ENCODE measurements at regions of chr4 and their contacts with region 1.

Region 1: DNA sequence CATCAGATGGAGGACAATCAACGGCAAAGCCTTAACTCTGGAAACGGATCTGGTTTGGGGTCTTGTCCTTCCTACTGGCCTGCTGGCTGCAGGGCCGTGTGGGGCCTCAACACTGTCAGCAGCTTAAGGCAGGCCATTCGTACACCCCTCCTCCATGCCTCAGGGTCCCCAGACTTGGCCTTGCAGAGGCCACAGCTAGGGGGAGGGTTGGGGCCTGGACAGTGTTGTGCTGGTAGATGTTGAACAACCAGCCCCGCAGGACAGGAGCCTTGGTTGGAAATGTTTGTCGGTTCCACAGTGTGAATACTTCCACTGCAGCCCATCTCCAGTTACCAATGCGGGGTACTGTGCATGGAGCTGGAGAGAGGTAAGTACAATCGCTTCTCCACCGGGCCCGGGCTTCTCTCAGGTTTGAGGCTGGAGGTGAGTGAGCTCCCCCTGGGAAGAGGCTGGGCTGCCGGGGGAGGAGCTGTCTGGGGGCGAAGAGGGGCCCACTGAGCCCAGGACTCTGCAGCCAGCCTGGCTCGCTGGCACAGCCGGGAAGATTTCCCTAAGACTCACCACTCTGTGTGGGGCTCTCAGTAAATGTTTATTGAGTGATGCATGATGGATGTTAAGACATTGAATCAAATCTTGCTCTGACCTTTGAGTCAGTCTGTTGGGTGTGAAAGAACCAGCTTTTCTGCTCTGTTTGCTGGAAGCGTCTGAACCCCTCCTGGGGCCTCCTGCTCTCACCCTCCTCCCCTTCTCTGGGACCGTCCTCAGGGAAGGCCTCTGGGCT is 19.7 kb upstream of the GPR78 start:
- DNase-seq: peak in 1 of 5 donors; percentile 20
- H3K4me3 ChIP-seq: no peak overlapping the region
- H3K27ac ChIP-seq: no peak overlapping the region
- H3K4me1 ChIP-seq: no peaks in the 10 kb centered on the region
- H3K27me3 ChIP-seq: no peaks in the 10 kb centered on the region
- CTCF ChIP-seq: no peak
- EP300 ChIP-seq: no peak
- POLR2A ChIP-seq: no peak

Region 2: GRCh38 chr4:7524064-7524682 is 1036.3 kb before region 1 on chr4:
- intact Hi-C with region 1: no loop called
- DNase-seq: no peak
- H3K4me3 ChIP-seq: no peak overlapping the region
- H3K27ac ChIP-seq: no peak overlapping the region
- H3K4me1 ChIP-seq: peaks cover 6% of the 10 kb centered on the region
- H3K27me3 ChIP-seq: no peaks in the 10 kb centered on the region
- CTCF ChIP-seq: no peak
- EP300 ChIP-seq: no peak
- POLR2A ChIP-seq: no peak

Region 3: DNA sequence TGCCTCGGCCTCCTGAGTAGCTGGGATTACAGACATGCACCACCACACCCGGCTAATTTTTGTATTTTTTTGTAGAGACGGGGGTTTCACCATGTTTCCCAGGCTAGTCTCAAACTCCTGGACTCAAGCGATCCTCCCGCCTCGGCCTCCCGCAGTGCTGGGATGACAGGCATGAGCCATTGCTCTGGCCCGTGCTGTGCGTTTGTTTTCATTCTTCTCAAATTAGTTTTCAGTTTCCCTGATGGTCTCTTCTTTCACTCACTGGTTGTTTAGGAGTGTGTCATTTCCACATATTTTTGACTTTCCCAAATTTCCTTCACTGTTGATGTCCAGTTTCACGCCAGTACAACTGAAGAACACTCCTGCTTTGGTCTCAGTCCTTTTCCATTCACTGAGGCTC is 329.6 kb before region 1 on chr4:
- intact Hi-C with region 1: loop called in 1 of 4 experiments (anchors 5 kb)
- DNase-seq: no peak
- H3K4me3 ChIP-seq: no peak overlapping the region
- H3K27ac ChIP-seq: no peak overlapping the region
- H3K4me1 ChIP-seq: peaks cover 9% of the 10 kb centered on the region
- H3K27me3 ChIP-seq: no peaks in the 10 kb centered on the region
- CTCF ChIP-seq: no peak
- EP300 ChIP-seq: no peak
- POLR2A ChIP-seq: no peak

Region 4: DNA sequence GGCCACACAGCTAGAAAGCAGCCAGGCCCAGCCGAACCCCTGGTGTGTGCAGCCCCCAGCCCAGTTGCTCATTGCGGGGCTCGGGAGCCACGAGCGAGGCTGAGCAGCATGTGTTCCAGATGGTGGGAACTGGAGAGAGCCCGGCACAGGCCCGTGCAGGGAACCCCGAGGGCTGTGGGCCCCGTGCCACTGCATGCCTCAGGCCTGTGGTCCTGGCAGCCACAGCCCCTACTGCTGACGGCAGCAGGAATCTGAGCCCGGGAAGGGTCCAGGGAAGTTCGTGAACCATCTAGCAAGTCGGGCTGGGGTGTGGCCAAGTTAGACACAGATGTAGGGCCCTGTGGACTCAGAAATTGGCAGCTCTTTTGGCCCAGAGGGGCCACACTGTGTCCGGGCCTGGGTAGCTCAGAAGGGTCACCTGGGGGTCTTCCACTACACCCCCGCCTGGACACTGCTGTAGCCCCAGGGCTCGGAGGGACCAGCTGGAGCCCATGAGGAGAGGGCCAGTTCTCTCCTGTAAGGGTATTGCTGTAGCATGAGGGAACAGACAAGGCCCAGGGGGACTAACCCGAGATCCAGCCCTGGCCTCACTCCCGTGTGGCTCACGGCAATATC is 278.8 kb before region 1 on chr4:
- intact Hi-C with region 1: no loop called
- DNase-seq: peak; percentile 78 to 95 (median 86)
- H3K4me3 ChIP-seq: no peak overlapping the region
- H3K27ac ChIP-seq: peak overlapping the region; percentile 43 to 73
- H3K4me1 ChIP-seq: peaks cover 22% of the 10 kb centered on the region
- H3K27me3 ChIP-seq: no peaks in the 10 kb centered on the region
- CTCF ChIP-seq: no peak
- EP300 ChIP-seq: no peak
- POLR2A ChIP-seq: no peak

Region 5: DNA sequence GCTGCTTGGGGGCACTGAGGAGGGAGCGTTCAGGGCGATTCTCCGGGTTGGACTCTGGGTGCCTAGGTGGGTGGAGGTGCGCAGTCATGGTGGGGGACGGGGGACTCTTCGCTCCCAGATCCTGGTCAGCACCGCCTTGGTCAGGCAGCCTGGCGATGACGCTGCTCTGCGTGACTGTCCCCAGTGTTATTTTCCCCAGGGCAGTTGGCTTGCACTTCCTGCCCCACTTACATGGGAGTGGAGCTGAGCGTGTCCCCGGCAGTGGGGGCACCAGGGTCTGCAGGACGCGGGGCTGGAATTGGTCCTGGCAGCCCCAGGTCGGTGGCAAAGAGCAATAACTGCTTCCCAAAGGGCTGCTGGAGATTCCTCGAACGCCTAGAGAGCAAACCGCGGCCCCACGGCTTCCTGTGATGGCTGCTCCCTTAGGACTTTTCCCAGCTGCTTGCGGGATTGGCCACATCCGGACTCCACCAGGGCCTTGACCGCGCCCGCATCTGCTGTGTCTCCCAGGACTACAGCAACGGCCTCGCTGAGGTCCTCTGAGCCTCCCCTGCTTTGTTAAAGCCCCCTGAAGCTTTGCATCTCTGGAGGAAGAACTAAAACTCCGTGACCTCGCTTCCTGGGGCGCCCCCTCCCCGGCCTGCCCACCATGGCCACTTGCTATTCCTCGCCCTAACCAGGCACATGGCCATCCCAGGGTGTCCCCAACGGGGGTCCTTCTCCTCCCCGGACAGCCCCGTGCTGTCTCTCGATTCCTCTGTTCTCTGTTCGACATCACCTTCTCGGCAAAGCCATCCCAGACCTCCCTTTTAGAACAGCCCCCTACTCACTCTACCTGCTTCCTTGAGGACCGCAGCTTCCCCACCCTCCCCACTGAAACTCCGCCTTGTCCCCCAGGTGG is 15.5 kb before region 1 on chr4:
- intact Hi-C with region 1: loop called in 1 of 4 experiments (anchors 2 kb)
- DNase-seq: peak in 1 of 5 donors; percentile 40
- H3K4me3 ChIP-seq: no peak overlapping the region
- H3K27ac ChIP-seq: no peak overlapping the region
- H3K4me1 ChIP-seq: peaks cover 5% of the 10 kb centered on the region
- H3K27me3 ChIP-seq: no peaks in the 10 kb centered on the region
- CTCF ChIP-seq: no peak
- EP300 ChIP-seq: no peak
- POLR2A ChIP-seq: no peak

Region 6: GRCh38 chr4:8651661-8652180 is 91.3 kb after region 1 on chr4:
- intact Hi-C with region 1: no loop called
- DNase-seq: peak in 2 of 5 donors; percentile 5 to 17
- H3K4me3 ChIP-seq: no peak overlapping the region
- H3K27ac ChIP-seq: no peak overlapping the region
- H3K4me1 ChIP-seq: no peaks in the 10 kb centered on the region
- H3K27me3 ChIP-seq: no peaks in the 10 kb centered on the region
- CTCF ChIP-seq: no peak
- EP300 ChIP-seq: no peak
- POLR2A ChIP-seq: no peak